MCF 10A (cell line): ENCODE measurements at regions of chr1 and their contacts with region 1.

Region 1: GRCh38 chr1:225652729-225653462 is at the start of gene ENAH:
- DNase-seq: peak; percentile 93
- H3K4me3 Mint-ChIP-seq: peak within 1 kb of the TSS; percentile 99
- H3K27ac Mint-ChIP-seq: peak within 1 kb of the TSS; percentile 94
- H3K4me1 Mint-ChIP-seq: peaks cover 67% of the 10 kb centered on the region
- H3K27me3 Mint-ChIP-seq: no peaks in the 10 kb centered on the region
- CTCF ChIP-seq: no peak
- total RNA-seq, gene ENAH: 346 and 420 TPM in 2 replicates

Region 2: DNA sequence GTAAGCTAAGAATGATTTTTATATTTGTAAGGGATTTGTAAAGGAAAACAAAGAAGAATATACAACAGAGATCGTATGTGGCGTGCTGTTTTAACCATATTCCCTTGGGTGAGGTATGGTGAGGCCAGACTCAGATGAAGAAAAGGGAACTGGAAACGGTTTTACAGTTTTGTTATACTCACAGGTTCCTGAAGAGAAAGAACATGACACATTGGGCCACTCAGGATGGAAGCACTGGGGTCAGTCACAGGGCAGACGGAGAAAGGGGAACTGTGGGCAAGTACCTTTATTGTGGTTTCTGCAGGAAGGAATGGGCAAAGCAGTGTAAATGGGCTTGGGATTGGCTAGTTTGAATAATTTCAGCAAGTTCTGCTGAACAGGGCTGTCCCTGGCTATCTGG is 402.5 kb before region 1 on chr1:
- CTCF ChIA-PET with region 1: no interaction called
- POLR2A ChIA-PET with region 1: no interaction called
- intact Hi-C with region 1: no loop called
- DNase-seq: no peak
- H3K4me3 Mint-ChIP-seq: no peak overlapping the region
- H3K27ac Mint-ChIP-seq: no peak overlapping the region
- H3K4me1 Mint-ChIP-seq: peaks cover 11% of the 10 kb centered on the region
- H3K27me3 Mint-ChIP-seq: no peaks in the 10 kb centered on the region
- CTCF ChIP-seq: no peak

Region 3: GRCh38 chr1:225508538-225509375 is 144.1 kb before region 1 on chr1:
- CTCF ChIA-PET with region 1: interaction called, 5 read pairs
- POLR2A ChIA-PET with region 1: interaction called, 41 read pairs
- intact Hi-C with region 1: no loop called
- DNase-seq: peak; percentile 99
- H3K4me3 Mint-ChIP-seq: no peak overlapping the region
- H3K27ac Mint-ChIP-seq: peak overlapping the region; percentile 83
- H3K4me1 Mint-ChIP-seq: peaks cover 32% of the 10 kb centered on the region
- H3K27me3 Mint-ChIP-seq: no peaks in the 10 kb centered on the region
- CTCF ChIP-seq: no peak

Region 4: GRCh38 chr1:225597926-225598575 is 54.8 kb before region 1 on chr1:
- CTCF ChIA-PET with region 1: interaction called, 8 read pairs
- POLR2A ChIA-PET with region 1: interaction called, 89 read pairs
- intact Hi-C with region 1: loop called (anchors 1 kb)
- DNase-seq: peak; percentile 59
- H3K4me3 Mint-ChIP-seq: no peak overlapping the region
- H3K27ac Mint-ChIP-seq: peak overlapping the region; percentile 25
- H3K4me1 Mint-ChIP-seq: peaks cover 38% of the 10 kb centered on the region
- H3K27me3 Mint-ChIP-seq: no peaks in the 10 kb centered on the region
- CTCF ChIP-seq: no peak

Region 5: GRCh38 chr1:225635649-225636048 is 17.2 kb before region 1 on chr1:
- CTCF ChIA-PET with region 1: interaction called, 4 read pairs
- POLR2A ChIA-PET with region 1: interaction called, 50 read pairs
- intact Hi-C with region 1: no loop called
- DNase-seq: no peak
- H3K4me3 Mint-ChIP-seq: no peak overlapping the region
- H3K27ac Mint-ChIP-seq: no peak overlapping the region
- H3K4me1 Mint-ChIP-seq: peaks cover 10% of the 10 kb centered on the region
- H3K27me3 Mint-ChIP-seq: no peaks in the 10 kb centered on the region
- CTCF ChIP-seq: no peak

Region 6: DNA sequence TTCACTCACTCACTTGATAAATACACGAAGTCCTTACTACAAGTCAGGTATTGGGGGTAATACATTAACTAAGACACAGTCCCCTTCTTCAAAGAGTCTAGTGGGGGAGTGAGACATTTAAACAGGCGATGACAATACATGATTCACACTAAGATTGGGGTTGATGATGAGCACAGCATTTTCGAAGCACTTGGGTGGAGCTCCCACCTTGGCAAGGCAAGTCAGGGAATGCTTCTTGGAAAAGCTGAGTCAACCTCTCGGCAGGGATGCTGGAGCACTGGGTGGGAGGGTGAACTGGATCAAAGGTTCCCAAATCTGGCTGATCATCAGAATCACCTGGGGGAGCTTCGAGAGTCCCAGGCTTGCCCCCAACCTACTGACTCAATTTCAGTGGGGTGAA is 57.9 kb after region 1 on chr1:
- CTCF ChIA-PET with region 1: interaction called, 22 read pairs
- POLR2A ChIA-PET with region 1: interaction called, 120 read pairs
- intact Hi-C with region 1: no loop called
- DNase-seq: peak; percentile 97
- H3K4me3 Mint-ChIP-seq: no peak overlapping the region
- H3K27ac Mint-ChIP-seq: peak overlapping the region; percentile 56
- H3K4me1 Mint-ChIP-seq: peaks cover 17% of the 10 kb centered on the region
- H3K27me3 Mint-ChIP-seq: no peaks in the 10 kb centered on the region
- CTCF ChIP-seq: no peak

Region 7: DNA sequence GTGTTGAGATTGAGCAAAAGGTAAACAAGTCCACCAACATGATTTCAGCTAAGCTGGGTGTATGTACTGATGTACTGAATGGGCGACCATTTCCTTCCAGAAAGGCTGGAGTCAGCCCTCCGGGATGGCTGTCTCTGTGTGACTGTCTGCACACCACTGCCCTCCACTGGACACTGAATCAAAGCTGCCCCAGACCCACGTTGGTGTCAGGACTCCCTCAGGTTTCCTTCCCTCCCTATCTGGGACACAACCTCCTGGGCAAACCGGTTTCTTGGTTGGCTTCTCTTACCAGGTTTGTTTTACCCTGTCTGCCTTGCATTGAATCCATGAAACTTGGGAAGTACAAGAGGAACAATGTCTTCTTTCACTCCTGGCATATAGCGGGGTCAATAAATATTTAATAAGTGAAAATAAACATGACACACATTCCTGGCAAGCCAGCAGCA is 119.5 kb after region 1 on chr1:
- CTCF ChIA-PET with region 1: interaction called, 68 read pairs
- POLR2A ChIA-PET with region 1: interaction called, 188 read pairs
- intact Hi-C with region 1: loop called (anchors 1 kb)
- DNase-seq: peak; percentile 97
- H3K4me3 Mint-ChIP-seq: no peak overlapping the region
- H3K27ac Mint-ChIP-seq: no peak overlapping the region
- H3K4me1 Mint-ChIP-seq: peaks cover 19% of the 10 kb centered on the region
- H3K27me3 Mint-ChIP-seq: no peaks in the 10 kb centered on the region
- CTCF ChIP-seq: peak; percentile 100

Region 8: DNA sequence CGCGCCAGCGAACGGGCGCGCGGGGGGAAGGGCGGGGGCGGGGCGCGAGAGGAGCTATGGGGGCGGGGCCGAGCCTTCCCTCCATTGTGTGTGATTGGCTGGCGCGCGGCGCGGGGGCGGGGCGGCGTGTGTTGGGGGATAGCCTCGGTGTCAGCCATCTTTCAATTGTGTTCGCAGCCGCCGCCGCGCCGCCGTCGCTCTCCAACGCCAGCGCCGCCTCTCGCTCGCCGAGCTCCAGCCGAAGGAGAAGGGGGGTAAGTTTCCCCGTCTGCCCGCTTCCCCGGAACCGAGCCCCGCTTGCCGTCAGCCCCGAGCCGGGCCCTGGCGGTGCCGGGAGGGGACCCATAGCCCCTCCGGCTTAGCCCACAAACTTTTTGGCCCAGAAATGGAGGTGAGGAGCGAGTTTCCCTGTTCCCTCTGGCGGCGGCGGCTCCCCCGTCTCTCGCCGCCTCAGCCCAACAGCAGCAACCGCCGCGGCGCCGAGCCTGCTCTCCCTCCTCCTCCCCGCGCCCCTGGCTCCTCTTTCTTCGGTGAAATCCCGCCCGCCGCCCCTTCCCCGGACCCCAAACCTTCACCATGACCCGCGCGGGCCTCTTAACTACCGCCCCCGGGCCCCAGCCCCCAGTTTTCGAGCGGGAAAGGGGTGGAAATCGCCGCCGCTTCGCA is 409.8 kb after region 1 on chr1 and contains the start of gene H3-3A:
- CTCF ChIA-PET with region 1: interaction called, 3 read pairs
- POLR2A ChIA-PET with region 1: interaction called, 15 read pairs
- intact Hi-C with region 1: loop called (anchors 5 kb)
- DNase-seq: peak; percentile 100
- H3K4me3 Mint-ChIP-seq: peak within 1 kb of the TSS; percentile 100
- H3K27ac Mint-ChIP-seq: peak within 1 kb of the TSS; percentile 99
- H3K4me1 Mint-ChIP-seq: peaks cover 35% of the 10 kb centered on the region
- H3K27me3 Mint-ChIP-seq: no peaks in the 10 kb centered on the region
- CTCF ChIP-seq: no peak
- total RNA-seq, gene H3-3A: 635 and 710 TPM in 2 replicates